A549 (cell line): ENCODE measurements at regions of chr10 and their contacts with region 1.

Region 1: GRCh38 chr10:68231106-68231816 is 652 bp downstream of the ATOH7 start:
- DNase-seq: peak; percentile 84 to 92
- ATAC-seq: peak; percentile 95 to 97
- H3K4me3 ChIP-seq: peak overlapping the region; percentile 51
- H3K27ac ChIP-seq: peak overlapping the region; percentile 81 to 96
- H3K4me1 ChIP-seq: peaks cover 11% of the 10 kb centered on the region
- CTCF ChIP-seq: peak; percentile 38
- EP300 ChIP-seq: no peak
- POLR2A ChIP-seq: peak; percentile 73
- RAD21 ChIP-seq: no peak

Region 2: DNA sequence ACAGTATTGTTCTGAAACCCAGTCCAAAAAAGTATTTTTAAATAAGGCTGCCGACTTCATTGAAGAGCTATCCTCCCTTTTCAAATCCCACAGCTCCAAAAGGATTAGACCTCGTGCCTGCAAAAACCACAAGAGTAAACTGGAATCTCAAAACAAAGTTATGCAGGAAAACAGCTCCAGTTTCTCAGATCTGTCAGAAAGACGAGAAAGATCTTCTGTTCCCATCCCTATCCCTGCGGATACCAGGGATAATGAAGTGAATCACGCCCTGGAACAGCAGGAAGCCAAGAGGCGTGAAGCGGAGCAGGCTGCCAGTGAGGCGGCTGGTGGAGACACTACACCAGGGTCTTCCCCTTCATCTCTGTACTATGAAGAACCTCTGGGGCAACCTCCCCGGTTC is 109.4 kb before region 1 on chr10:
- CTCF ChIA-PET with region 1: no interaction called
- POLR2A ChIA-PET with region 1: no interaction called
- DNase-seq: no peak
- ATAC-seq: no peak
- H3K4me3 ChIP-seq: no peak overlapping the region
- H3K27ac ChIP-seq: no peak overlapping the region
- H3K4me1 ChIP-seq: peaks cover 18% of the 10 kb centered on the region
- CTCF ChIP-seq: no peak
- EP300 ChIP-seq: no peak
- POLR2A ChIP-seq: no peak
- RAD21 ChIP-seq: no peak

Region 3: GRCh38 chr10:68184546-68184945 is 46.7 kb before region 1 on chr10:
- CTCF ChIA-PET with region 1: no interaction called
- POLR2A ChIA-PET with region 1: no interaction called
- DNase-seq: no peak
- ATAC-seq: no peak
- H3K4me3 ChIP-seq: no peak overlapping the region
- H3K27ac ChIP-seq: no peak overlapping the region
- H3K4me1 ChIP-seq: no peaks in the 10 kb centered on the region
- CTCF ChIP-seq: no peak
- EP300 ChIP-seq: no peak
- POLR2A ChIP-seq: no peak
- RAD21 ChIP-seq: no peak

Region 4: GRCh38 chr10:68253346-68253745 is 22.1 kb after region 1 on chr10:
- CTCF ChIA-PET with region 1: interaction called, 10 read pairs
- POLR2A ChIA-PET with region 1: interaction called, 5 read pairs
- DNase-seq: no peak
- ATAC-seq: no peak
- H3K4me3 ChIP-seq: no peak overlapping the region
- H3K27ac ChIP-seq: no peak overlapping the region
- H3K4me1 ChIP-seq: no peaks in the 10 kb centered on the region
- CTCF ChIP-seq: no peak
- EP300 ChIP-seq: no peak
- POLR2A ChIP-seq: no peak
- RAD21 ChIP-seq: no peak

Region 5: DNA sequence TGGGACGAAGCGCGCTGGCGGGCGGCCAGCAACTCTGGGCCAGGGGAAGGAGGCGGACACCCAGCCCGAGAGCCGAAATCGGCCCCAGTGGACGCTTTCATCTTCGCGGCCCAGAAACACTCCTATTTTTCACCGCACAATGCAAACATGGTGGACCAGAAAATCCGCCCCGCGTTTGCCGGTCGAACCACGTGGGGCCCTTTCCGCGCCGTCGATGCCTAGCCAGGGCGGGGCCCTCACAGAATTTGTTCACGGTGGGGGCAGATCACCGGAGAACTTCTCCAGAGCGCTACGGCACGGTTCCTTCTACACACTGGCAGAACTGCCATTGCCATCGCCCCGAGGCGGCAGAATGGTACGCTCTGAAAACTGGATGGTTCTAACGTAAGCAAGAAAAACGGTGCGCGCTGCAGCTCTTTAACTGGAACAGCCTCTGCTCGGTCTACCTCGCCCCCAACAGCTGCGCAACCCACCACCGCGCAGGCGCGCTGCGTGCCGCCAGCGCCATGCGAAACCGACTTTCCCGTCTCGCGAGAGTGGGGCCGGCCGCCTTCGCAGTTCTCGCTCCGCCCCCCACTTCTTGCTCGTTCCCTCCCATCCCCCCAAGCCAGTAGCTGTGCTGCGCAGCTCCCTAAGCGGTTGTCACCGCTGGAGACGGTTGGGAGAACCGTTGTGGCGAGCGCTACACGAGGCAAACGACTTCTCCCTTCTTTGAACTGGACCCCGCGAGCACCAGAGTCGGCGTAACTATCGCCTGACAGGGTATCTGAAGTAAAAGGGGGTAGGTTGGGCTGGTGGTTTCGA is 100.4 kb after region 1 on chr10 and contains the start of gene HNRNPH3:
- CTCF ChIA-PET with region 1: interaction called, 3 read pairs
- POLR2A ChIA-PET with region 1: interaction called, 22 read pairs
- DNase-seq: peak; percentile 90 to 99
- ATAC-seq: peak; percentile 81 to 88
- H3K4me3 ChIP-seq: peak within 1 kb of the TSS; percentile 97
- H3K27ac ChIP-seq: peak within 1 kb of the TSS; percentile 99
- H3K4me1 ChIP-seq: peaks cover 48% of the 10 kb centered on the region
- CTCF ChIP-seq: no peak
- EP300 ChIP-seq: no peak
- POLR2A ChIP-seq: peak; percentile 97
- RAD21 ChIP-seq: no peak; a peak in 1 of 5 replicates
- polyA plus RNA-seq, gene HNRNPH3: 108 and 210 TPM in 2 replicates